ENCODE measurements at regions of chr20 and their contacts with region 1.

Region 1: DNA sequence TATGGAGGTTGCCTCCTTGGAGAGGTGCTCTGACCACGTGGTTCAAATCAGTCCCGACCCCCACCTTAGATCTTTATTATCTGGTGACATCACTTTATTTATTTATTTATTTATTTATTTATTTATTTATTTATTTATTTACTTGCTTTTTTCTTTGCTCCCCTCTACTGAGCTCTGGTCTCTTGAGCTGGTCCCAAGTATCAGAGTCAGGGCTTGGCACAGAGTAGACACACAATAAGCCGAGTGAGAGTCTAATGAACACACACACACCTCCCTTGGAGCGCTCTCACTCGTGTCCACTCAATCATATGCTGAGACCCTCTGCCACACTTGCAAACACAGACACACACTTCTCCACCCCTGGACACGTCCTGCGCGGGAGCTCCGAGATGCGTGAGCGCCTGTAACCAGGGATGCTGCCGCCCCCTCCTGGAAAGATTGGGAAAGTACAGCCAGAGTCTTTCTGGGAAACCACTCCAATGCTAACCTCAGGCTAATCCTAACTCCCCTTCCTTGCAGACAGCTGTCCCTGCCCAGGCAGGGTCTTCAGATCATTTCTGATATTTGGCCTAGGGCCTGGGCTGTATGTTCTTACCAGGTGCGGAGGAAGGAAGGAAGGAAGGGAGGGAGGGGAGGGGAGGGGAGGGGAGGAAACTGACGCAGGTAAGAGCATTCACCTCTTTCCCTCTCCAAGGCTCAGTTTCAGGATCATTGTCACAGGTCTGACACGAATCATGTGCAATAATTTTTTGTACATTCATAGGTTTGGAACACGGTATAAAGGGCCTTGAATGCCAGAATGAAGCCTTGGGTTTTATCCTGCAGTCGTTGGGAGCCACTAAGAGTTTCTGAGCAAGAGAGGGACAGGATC is 70.9 kb downstream of the STK35 start:
- DNase-seq: peak; percentile 32 to 81 (median 64)
- ATAC-seq: peak; percentile 58
- H3K4me3 ChIP-seq: no peak overlapping the region
- H3K4me3 Mint-ChIP-seq: no peak overlapping the region
- H3K27ac ChIP-seq: no peak overlapping the region
- H3K27ac Mint-ChIP-seq: no peak overlapping the region
- H3K4me1 ChIP-seq: peaks cover 3% of the 10 kb centered on the region
- H3K4me1 Mint-ChIP-seq: peaks cover 3% of the 10 kb centered on the region
- H3K27me3 ChIP-seq: no peaks in the 10 kb centered on the region
- H3K27me3 Mint-ChIP-seq: peaks cover 15% of the 10 kb centered on the region
- CTCF ChIP-seq: peak; percentile 82

Region 2: DNA sequence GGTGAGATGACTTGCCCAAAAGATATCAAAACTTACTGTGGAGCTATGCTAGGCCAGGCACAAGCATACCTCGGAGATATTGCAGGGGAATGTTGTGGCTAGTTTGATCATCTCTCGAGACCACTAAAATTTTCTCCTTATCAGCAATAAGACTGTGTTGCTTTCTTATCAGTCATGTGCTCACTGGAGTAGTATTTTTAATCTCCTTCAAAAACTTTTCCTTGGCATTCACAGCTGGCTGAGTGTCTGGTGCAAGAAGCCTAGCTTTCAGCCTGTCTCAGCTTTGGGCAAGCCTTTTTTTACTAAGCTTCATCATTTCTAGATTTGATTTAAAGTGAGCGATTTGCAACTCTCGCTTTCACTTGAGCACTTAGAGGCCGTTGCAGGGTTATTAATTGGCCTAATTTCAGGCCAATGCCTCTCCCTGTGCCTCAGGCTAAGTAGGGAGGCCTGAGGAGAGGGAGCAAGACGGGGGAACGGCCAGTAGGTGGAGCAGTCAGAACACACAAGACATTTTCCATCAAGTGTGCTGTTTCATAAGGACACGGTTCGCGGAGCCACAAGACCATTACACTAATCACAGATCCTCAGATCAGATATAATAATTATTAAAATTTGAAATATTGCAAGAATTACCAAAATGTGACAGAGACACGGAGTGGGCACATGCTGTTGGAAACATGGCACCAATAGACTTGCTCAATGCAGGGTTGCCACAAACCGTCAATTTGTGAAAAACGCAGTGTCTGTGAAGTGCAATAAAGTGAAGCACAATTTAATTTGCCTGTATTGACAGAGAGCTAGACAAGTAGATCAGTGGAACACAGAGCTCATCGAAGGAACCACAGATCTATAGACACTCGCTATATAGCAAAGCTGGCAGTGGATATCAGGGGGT is 408.2 kb before region 1 on chr20:
- CTCF ChIA-PET with region 1: interaction called, 9 read pairs
- POLR2A ChIA-PET with region 1: no interaction called
- intact Hi-C with region 1: loop called in 1 of 2 experiments (anchors 2 kb)
- DNase-seq: peak; percentile 30 to 73 (median 57)
- ATAC-seq: peak; percentile 75
- H3K4me3 ChIP-seq: no peak overlapping the region
- H3K4me3 Mint-ChIP-seq: no peak overlapping the region
- H3K27ac ChIP-seq: no peak overlapping the region
- H3K27ac Mint-ChIP-seq: no peak overlapping the region
- H3K4me1 ChIP-seq: no peaks in the 10 kb centered on the region
- H3K4me1 Mint-ChIP-seq: no peaks in the 10 kb centered on the region
- H3K27me3 ChIP-seq: no peaks in the 10 kb centered on the region
- H3K27me3 Mint-ChIP-seq: peaks cover 2% of the 10 kb centered on the region
- CTCF ChIP-seq: peak; percentile 88

Region 3: DNA sequence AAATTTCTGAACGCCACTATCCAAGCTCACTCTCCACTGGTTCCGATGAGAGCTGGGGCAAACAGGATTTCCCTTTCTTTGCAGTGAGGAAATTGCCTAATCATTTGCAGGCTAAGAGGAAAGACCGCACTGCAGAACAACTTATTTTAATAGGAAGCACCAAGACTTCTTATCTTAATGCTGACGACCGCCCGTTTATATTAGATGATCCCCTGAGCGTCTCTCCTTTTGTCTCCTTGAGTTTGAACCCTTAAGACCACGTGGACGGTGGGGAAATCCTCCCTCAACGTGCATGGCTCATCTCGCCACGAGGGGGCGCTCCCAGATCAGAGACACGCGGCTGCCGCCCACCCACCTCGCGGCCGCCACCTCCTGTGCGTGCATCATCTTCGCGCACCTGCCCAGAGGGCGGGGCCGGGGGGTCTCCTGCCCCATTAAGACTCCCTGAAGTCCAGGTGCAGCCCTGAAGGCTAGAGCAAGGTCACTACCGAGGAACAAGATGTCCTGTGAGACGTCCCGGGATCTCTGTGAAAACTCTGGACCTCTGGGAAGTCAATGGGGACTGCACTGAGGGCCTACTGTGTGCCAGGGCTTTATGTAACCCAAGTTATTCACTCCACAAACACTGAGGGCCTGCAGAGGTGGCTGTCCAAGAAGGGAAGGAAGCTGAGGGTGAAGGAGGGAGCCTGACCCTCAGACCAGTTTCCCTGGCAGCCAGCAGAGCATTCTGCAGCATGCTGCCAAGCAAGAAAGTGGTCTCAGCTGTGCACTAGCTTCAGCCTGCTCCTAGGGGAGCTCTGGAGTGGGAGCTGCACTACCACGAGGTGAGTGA is 206.8 kb before region 1 on chr20:
- CTCF ChIA-PET with region 1: interaction called, 100 read pairs
- POLR2A ChIA-PET with region 1: no interaction called
- intact Hi-C with region 1: loop called in 1 of 2 experiments (anchors 1 kb)
- DNase-seq: peak; percentile 46 to 84 (median 75)
- ATAC-seq: peak; percentile 57
- H3K4me3 ChIP-seq: no peak overlapping the region
- H3K4me3 Mint-ChIP-seq: peak overlapping the region; percentile 56
- H3K27ac ChIP-seq: no peak overlapping the region
- H3K27ac Mint-ChIP-seq: no peak overlapping the region
- H3K4me1 ChIP-seq: peaks cover 9% of the 10 kb centered on the region
- H3K4me1 Mint-ChIP-seq: peaks cover 12% of the 10 kb centered on the region
- H3K27me3 ChIP-seq: peaks cover 0 to 3% of the 10 kb centered on the region in 2 experiments
- H3K27me3 Mint-ChIP-seq: peaks cover 26% of the 10 kb centered on the region
- CTCF ChIP-seq: peak; percentile 92

Region 4: DNA sequence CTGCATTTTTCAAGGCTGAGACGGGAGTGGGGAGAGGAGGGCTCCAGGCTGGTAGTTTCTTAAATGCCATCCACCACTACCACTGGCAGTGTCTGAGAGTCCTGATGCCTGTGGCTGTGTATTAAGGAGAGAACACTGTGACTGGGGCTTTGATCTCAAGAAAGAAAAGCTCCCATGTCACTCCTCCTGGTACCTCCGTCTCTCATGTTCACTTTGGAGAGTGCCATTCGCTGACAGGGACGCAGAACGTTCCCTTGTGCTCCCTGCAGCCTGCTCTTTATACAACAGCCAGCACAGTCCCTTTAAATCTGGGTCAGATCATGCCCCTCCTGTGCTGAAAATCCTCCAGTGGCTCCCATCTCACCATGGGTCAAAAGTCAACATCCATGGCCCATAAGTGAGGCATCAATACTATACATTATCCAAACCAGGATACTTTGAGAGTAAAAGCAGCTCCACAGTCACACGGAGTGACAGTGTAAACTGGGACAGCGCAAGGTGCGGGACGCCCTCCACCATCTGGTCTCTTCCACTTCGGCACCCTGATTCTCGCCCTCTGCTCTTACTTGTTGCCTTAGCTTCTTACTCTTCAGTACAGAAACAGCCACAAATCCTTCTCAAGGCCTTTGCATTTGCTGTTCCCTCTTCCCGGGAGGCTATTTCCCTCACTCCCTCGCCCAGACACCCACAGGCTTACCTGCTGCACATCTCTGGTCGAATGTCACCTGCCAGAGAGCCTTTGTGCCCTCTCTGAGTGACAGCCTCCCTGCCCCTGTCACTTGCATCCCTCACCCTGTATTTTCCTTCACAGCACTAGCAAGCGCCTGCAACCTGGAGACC is 198.7 kb before region 1 on chr20:
- CTCF ChIA-PET with region 1: interaction called, 13 read pairs
- POLR2A ChIA-PET with region 1: no interaction called
- intact Hi-C with region 1: no loop called
- DNase-seq: no peak
- ATAC-seq: no peak
- H3K4me3 ChIP-seq: no peak overlapping the region
- H3K4me3 Mint-ChIP-seq: no peak overlapping the region
- H3K27ac ChIP-seq: no peak overlapping the region
- H3K27ac Mint-ChIP-seq: no peak overlapping the region
- H3K4me1 ChIP-seq: no peaks in the 10 kb centered on the region
- H3K4me1 Mint-ChIP-seq: no peaks in the 10 kb centered on the region
- H3K27me3 ChIP-seq: peaks cover 0 to 4% of the 10 kb centered on the region in 2 experiments
- H3K27me3 Mint-ChIP-seq: peaks cover 20% of the 10 kb centered on the region
- CTCF ChIP-seq: no peak

Region 5: GRCh38 chr20:2005831-2006426 is 166.6 kb before region 1 on chr20:
- CTCF ChIA-PET with region 1: interaction called, 48 read pairs
- POLR2A ChIA-PET with region 1: no interaction called
- intact Hi-C with region 1: loop called in 1 of 2 experiments (anchors 1 kb)
- DNase-seq: peak; percentile 26 to 70 (median 57)
- ATAC-seq: no peak
- H3K4me3 ChIP-seq: no peak overlapping the region
- H3K4me3 Mint-ChIP-seq: no peak overlapping the region
- H3K27ac ChIP-seq: no peak overlapping the region
- H3K27ac Mint-ChIP-seq: no peak overlapping the region
- H3K4me1 ChIP-seq: no peaks in the 10 kb centered on the region
- H3K4me1 Mint-ChIP-seq: no peaks in the 10 kb centered on the region
- H3K27me3 ChIP-seq: peaks cover 0 to under 1% of the 10 kb centered on the region in 2 experiments
- H3K27me3 Mint-ChIP-seq: peaks cover 36% of the 10 kb centered on the region
- CTCF ChIP-seq: no peak

Region 6: GRCh38 chr20:2086177-2086979 is 86.2 kb before region 1 on chr20:
- CTCF ChIA-PET with region 1: interaction called, 5 read pairs
- POLR2A ChIA-PET with region 1: no interaction called
- intact Hi-C with region 1: loop called in 1 of 2 experiments (anchors 1 kb)
- DNase-seq: no peak
- ATAC-seq: no peak
- H3K4me3 ChIP-seq: no peak overlapping the region
- H3K4me3 Mint-ChIP-seq: no peak overlapping the region
- H3K27ac ChIP-seq: no peak overlapping the region
- H3K27ac Mint-ChIP-seq: no peak overlapping the region
- H3K4me1 ChIP-seq: no peaks in the 10 kb centered on the region
- H3K4me1 Mint-ChIP-seq: no peaks in the 10 kb centered on the region
- H3K27me3 ChIP-seq: peaks cover 0 to 7% of the 10 kb centered on the region in 2 experiments
- H3K27me3 Mint-ChIP-seq: peaks cover 39% of the 10 kb centered on the region
- CTCF ChIP-seq: no peak

Region 7: GRCh38 chr20:2162125-2162822 is 10.3 kb before region 1 on chr20:
- CTCF ChIA-PET with region 1: interaction called, 25 read pairs
- POLR2A ChIA-PET with region 1: interaction called, 4 read pairs
- intact Hi-C with region 1: no loop called
- DNase-seq: no peak
- ATAC-seq: no peak
- H3K4me3 ChIP-seq: no peak overlapping the region
- H3K4me3 Mint-ChIP-seq: no peak overlapping the region
- H3K27ac ChIP-seq: no peak overlapping the region
- H3K27ac Mint-ChIP-seq: no peak overlapping the region
- H3K4me1 ChIP-seq: no peaks in the 10 kb centered on the region
- H3K4me1 Mint-ChIP-seq: no peaks in the 10 kb centered on the region
- H3K27me3 ChIP-seq: no peaks in the 10 kb centered on the region
- H3K27me3 Mint-ChIP-seq: no peaks in the 10 kb centered on the region
- CTCF ChIP-seq: no peak

Measured in CD8-positive, alpha-beta T cell (primary cell).